Prostate gland (tissue), 2 donors: ENCODE measurements at regions of chr12 and their contacts with region 1.

Region 1: DNA sequence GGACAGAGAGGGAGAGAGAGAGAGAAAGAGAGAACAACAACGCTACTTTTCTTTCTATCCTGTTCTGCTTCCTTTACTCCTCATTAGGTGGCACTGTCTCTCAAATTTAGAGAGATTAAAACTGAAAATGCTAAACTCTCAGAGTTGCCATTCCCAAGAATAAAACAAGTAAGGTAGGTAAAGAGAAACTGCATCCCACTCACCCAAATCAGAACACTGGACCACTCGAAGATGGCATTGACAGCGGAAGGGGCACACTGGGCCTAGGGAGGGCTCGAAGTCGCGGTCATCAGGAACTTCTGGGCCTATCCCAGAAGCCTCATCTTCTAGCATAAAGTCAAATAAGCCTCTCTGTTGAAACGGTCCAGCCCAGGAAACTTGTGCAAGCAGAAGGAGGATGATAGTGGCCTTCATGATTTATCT is 4.5 kb downstream of the DCN start:
- DNase-seq: no peak
- H3K4me3 ChIP-seq: peak overlapping the region; percentile 8 to 16
- H3K27ac ChIP-seq: peak overlapping the region; percentile 36 to 63
- H3K4me1 ChIP-seq: no peaks in the 10 kb centered on the region
- H3K27me3 ChIP-seq: no peaks in the 10 kb centered on the region
- CTCF ChIP-seq: peak in 3 of 4 experiments; percentile 20 to 52 (median 35)
- POLR2A ChIP-seq: no peak

Region 2: GRCh38 chr12:90978117-90978770 is 199.9 kb before region 1 on chr12:
- intact Hi-C with region 1: loop called (anchors 5 kb)
- DNase-seq: no peak
- H3K4me3 ChIP-seq: no peak overlapping the region
- H3K27ac ChIP-seq: no peak overlapping the region
- H3K4me1 ChIP-seq: no peaks in the 10 kb centered on the region
- H3K27me3 ChIP-seq: no peaks in the 10 kb centered on the region
- CTCF ChIP-seq: peak; percentile 26 to 75 (median 63)
- POLR2A ChIP-seq: no peak

Region 3: GRCh38 chr12:91295324-91295723 is 117.2 kb after region 1 on chr12:
- intact Hi-C with region 1: no loop called
- DNase-seq: no peak
- H3K4me3 ChIP-seq: no peak overlapping the region
- H3K27ac ChIP-seq: no peak overlapping the region
- H3K4me1 ChIP-seq: no peaks in the 10 kb centered on the region
- H3K27me3 ChIP-seq: no peaks in the 10 kb centered on the region
- CTCF ChIP-seq: no peak
- POLR2A ChIP-seq: no peak

Region 4: DNA sequence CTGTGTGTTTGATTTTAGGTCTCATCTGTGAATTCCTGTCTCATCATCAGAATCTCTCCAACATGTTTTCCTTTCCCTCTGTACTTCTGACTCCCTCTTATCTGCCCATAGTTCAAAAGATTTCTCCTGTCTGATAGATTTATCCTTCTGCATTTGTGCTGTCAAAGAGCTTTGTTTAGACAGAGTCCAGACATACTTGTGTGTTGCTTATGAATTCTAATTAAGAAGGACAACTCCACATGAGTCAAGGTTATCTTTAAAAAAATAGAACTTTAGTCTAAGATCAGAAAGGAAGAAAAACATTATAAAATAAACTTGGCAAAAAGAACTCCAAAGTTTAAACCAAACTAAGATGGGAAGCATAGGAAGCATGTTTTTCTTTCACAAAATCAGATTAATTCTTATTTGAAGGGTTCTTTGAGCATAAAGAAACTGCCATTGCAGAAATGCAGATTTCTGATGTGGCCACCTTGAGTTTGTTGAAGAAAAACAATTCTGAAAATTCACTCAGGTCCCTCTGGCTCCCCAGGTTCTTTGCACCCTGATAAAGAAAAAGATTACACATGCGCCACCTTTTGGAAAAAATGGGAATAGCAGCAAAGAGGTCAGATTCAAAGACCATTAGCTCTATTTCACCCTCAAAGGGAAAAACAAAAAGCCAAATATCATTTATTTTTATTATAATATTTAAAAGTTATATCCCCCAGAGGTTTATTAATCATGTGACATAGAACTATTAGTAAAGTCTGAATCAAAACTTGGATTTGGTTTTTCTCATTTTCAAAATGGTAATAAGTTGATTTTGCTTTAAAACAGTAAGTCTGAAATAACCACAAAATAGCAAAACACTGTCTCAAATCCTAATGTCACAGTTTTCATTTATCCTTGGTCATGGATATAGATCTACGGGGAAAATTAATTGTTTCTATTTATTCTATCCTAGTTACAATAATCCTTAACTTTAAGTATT is 148.2 kb after region 1 on chr12:
- intact Hi-C with region 1: loop called (anchors 5 kb)
- DNase-seq: peak; percentile 25
- H3K4me3 ChIP-seq: no peak overlapping the region
- H3K27ac ChIP-seq: no peak overlapping the region
- H3K4me1 ChIP-seq: no peaks in the 10 kb centered on the region
- H3K27me3 ChIP-seq: no peaks in the 10 kb centered on the region
- CTCF ChIP-seq: peak; percentile 45 to 60 (median 54)
- POLR2A ChIP-seq: no peak

Region 5: GRCh38 chr12:91355150-91356006 is 177.2 kb after region 1 on chr12:
- intact Hi-C with region 1: loop called (anchors 5 kb)
- DNase-seq: peak; percentile 62
- H3K4me3 ChIP-seq: no peak overlapping the region
- H3K27ac ChIP-seq: no peak overlapping the region
- H3K4me1 ChIP-seq: no peaks in the 10 kb centered on the region
- H3K27me3 ChIP-seq: no peaks in the 10 kb centered on the region
- CTCF ChIP-seq: peak; percentile 58 to 81 (median 74)
- POLR2A ChIP-seq: no peak